Activated B cell treated with CpG ODN at 0.5 μM for 24 hours (primary cell): ENCODE measurements at regions of chr11 and their contacts with region 1.

Region 1: GRCh38 chr11:57426929-57427726 is at the start of gene SLC43A3:
- DNase-seq: peak; percentile 72
- ATAC-seq: peak; percentile 69
- H3K4me3 Mint-ChIP-seq: peak within 1 kb of the TSS; percentile 92
- H3K27ac Mint-ChIP-seq: peak within 1 kb of the TSS; percentile 91
- H3K4me1 Mint-ChIP-seq: peaks cover 47% of the 10 kb centered on the region
- H3K27me3 Mint-ChIP-seq: no peaks in the 10 kb centered on the region
- CTCF ChIP-seq: no peak
- total RNA-seq, gene SLC43A3: 213 and 237 TPM in 2 replicates

Region 2: GRCh38 chr11:56474729-56475235 is 952.3 kb before region 1 on chr11:
- CTCF ChIA-PET with region 1: no interaction called
- POLR2A ChIA-PET with region 1: no interaction called
- intact Hi-C with region 1: no loop called
- DNase-seq: no peak
- ATAC-seq: no peak
- H3K4me3 Mint-ChIP-seq: no peak overlapping the region
- H3K27ac Mint-ChIP-seq: no peak overlapping the region
- H3K4me1 Mint-ChIP-seq: no peaks in the 10 kb centered on the region
- H3K27me3 Mint-ChIP-seq: no peaks in the 10 kb centered on the region
- CTCF ChIP-seq: no peak

Region 3: DNA sequence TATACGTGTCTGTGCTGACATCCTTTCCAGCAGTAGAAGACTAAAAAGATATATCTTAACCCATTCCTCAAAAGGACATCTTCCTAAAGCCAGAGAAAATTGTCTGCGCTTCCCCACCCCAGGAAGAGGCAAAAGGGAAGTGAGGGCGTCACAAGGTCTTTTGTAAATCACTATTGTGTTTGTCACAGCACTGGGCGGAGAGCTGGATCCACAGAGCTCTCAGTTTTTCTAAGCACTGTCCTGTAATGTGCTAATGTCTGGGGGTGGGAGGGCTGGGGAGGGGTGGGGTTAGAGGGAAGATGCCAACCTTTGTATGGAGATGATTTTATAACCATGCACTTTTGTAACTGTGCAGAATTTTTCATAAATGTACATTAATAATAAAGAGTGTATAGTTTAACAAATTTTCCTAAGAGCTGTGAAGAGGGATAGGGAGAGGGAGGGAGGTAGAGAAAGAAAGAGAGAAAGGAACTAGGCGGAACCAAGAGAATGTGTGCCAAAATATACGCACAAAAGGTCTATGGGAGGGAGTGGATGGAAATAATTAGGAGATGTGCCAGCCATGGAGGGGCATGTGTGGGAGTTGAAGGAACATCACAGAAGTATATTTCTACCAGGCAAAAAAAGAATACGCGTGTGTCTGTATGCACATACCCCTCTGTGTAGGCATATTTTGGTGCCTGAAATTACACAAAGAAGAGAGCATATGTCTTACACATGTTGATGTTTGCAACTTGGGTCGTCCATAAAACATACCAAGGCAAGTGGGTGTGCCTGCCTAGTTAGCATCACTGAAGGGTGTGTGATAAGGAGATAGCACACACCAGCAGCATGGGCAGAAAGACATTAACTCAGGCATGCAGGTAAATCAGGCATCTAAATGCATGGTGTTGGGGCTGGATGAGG is 235.6 kb before region 1 on chr11:
- CTCF ChIA-PET with region 1: no interaction called
- POLR2A ChIA-PET with region 1: no interaction called
- intact Hi-C with region 1: no loop called
- DNase-seq: no peak
- ATAC-seq: no peak
- H3K4me3 Mint-ChIP-seq: no peak overlapping the region
- H3K27ac Mint-ChIP-seq: no peak overlapping the region
- H3K4me1 Mint-ChIP-seq: no peaks in the 10 kb centered on the region
- H3K27me3 Mint-ChIP-seq: peaks cover 9% of the 10 kb centered on the region
- CTCF ChIP-seq: no peak

Region 4: DNA sequence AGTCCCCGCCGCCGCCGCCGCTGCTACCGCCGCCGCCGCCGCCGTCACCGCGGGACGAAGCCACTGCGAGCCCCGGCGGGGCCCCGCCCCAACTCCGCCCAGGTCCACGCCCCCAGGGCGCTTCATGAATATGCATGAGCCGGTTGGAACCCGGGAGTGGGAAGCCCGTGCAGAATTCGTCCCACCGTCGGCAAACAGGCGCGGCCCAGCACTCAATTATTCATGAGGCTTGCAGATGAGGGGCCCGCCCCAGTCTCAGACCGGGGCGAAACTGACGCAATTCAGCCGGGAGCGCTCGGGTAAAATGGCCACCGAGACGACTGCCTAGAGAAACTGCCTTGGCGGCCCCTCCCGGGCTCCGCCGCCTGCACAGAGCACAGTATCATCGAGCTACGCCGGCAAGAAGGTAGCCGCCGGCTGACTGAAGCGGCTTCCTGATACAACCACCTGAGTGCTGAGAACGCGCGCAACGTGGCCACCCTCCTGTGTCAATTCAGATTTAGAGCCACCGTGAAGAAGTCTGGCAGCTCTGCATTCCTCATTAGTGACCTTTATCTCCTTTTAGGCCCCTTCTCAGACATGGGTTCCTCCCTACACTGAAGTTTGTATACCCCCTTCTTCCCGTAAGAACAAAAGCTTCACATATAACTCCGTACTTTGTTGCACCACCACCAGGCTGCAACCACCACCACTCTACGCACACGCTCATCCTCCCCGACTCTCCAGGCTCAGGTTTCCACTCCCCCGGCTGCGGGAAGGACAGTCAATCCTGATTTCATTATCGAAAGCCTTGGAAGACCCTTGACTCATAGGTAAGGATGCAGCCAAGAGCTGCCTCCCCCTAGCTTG is 102.0 kb before region 1 on chr11 and contains the start of gene TNKS1BP1:
- CTCF ChIA-PET with region 1: no interaction called
- POLR2A ChIA-PET with region 1: interaction called, 6 read pairs
- intact Hi-C with region 1: loop called (anchors 1 kb)
- DNase-seq: peak; percentile 89
- ATAC-seq: peak; percentile 88
- H3K4me3 Mint-ChIP-seq: peak within 1 kb of the TSS; percentile 89
- H3K27ac Mint-ChIP-seq: peak within 1 kb of the TSS; percentile 95
- H3K4me1 Mint-ChIP-seq: peaks cover 34% of the 10 kb centered on the region
- H3K27me3 Mint-ChIP-seq: no peaks in the 10 kb centered on the region
- CTCF ChIP-seq: no peak
- total RNA-seq, gene TNKS1BP1: 13.9 and 14.3 TPM in 2 replicates

Region 5: GRCh38 chr11:57406337-57406904 is 20.7 kb before region 1 on chr11:
- CTCF ChIA-PET with region 1: no interaction called
- POLR2A ChIA-PET with region 1: interaction called, 238 read pairs
- intact Hi-C with region 1: loop called (anchors 1 kb)
- DNase-seq: no peak
- ATAC-seq: peak; percentile 80
- H3K4me3 Mint-ChIP-seq: peak overlapping the region; percentile 40
- H3K27ac Mint-ChIP-seq: peak overlapping the region; percentile 88
- H3K4me1 Mint-ChIP-seq: peaks cover 50% of the 10 kb centered on the region
- H3K27me3 Mint-ChIP-seq: no peaks in the 10 kb centered on the region
- CTCF ChIP-seq: no peak

Region 6: GRCh38 chr11:57474017-57474802 is 47.1 kb after region 1 on chr11:
- CTCF ChIA-PET with region 1: no interaction called
- POLR2A ChIA-PET with region 1: interaction called, 8 read pairs
- intact Hi-C with region 1: loop called (anchors 2 kb)
- DNase-seq: no peak
- ATAC-seq: no peak
- H3K4me3 Mint-ChIP-seq: peak overlapping the region; percentile 50
- H3K27ac Mint-ChIP-seq: no peak overlapping the region
- H3K4me1 Mint-ChIP-seq: peaks cover 27% of the 10 kb centered on the region
- H3K27me3 Mint-ChIP-seq: peaks cover 9% of the 10 kb centered on the region
- CTCF ChIP-seq: no peak

Region 7: DNA sequence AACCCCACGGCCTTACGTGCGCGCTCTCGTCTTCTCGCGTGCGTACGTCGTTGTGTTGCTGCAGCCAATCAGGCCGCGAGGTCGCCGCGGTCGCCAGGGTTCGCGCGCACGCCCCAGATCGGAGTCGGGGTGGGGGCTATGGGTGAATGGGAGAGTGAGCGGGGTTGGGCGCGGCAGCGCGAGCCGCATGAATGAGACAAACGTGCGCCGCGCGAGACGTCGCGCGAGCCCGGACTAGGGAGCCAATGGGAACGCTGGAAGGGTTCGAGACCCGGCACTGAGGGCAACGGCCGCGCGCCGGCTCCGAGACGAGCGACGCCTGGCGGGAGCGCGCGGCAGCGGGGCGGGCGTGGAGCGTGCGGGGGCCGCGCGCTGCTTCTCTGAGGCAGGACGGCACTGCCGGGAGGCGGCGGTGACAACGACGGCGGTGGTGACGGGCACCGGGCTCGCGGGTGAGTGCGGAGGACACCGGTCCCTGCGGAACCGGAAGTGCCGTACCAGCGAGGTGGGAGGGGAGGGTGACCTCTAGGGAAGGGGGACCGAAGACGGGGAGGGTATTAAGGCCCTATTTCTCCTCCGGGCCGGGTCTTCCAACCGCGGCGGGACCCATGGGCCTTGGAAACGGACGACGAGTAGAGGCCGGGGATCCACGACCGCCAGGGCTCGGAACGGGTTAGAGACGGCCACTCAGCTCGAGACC is 240.8 kb after region 1 on chr11 and contains the start of gene ZDHHC5:
- CTCF ChIA-PET with region 1: no interaction called
- POLR2A ChIA-PET with region 1: no interaction called
- intact Hi-C with region 1: loop called (anchors 1 kb)
- DNase-seq: peak; percentile 97
- ATAC-seq: peak; percentile 80
- H3K4me3 Mint-ChIP-seq: peak within 1 kb of the TSS; percentile 89
- H3K27ac Mint-ChIP-seq: peak within 1 kb of the TSS; percentile 99
- H3K4me1 Mint-ChIP-seq: peaks cover 49% of the 10 kb centered on the region
- H3K27me3 Mint-ChIP-seq: no peaks in the 10 kb centered on the region
- CTCF ChIP-seq: no peak
- total RNA-seq, gene ZDHHC5: 50.9 and 60.7 TPM in 2 replicates

Region 8: GRCh38 chr11:59216641-59217564 is 1789.8 kb after region 1 on chr11:
- CTCF ChIA-PET with region 1: no interaction called
- POLR2A ChIA-PET with region 1: interaction called, 5 read pairs
- intact Hi-C with region 1: loop called (anchors 10 kb)
- DNase-seq: peak; percentile 35
- ATAC-seq: peak; percentile 69
- H3K4me3 Mint-ChIP-seq: peak overlapping the region; percentile 52
- H3K27ac Mint-ChIP-seq: peak overlapping the region; percentile 91
- H3K4me1 Mint-ChIP-seq: peaks cover 100% of the 10 kb centered on the region
- H3K27me3 Mint-ChIP-seq: no peaks in the 10 kb centered on the region
- CTCF ChIP-seq: no peak